ENCODE measurements at regions of chr22 and their contacts with region 1.

Region 1: DNA sequence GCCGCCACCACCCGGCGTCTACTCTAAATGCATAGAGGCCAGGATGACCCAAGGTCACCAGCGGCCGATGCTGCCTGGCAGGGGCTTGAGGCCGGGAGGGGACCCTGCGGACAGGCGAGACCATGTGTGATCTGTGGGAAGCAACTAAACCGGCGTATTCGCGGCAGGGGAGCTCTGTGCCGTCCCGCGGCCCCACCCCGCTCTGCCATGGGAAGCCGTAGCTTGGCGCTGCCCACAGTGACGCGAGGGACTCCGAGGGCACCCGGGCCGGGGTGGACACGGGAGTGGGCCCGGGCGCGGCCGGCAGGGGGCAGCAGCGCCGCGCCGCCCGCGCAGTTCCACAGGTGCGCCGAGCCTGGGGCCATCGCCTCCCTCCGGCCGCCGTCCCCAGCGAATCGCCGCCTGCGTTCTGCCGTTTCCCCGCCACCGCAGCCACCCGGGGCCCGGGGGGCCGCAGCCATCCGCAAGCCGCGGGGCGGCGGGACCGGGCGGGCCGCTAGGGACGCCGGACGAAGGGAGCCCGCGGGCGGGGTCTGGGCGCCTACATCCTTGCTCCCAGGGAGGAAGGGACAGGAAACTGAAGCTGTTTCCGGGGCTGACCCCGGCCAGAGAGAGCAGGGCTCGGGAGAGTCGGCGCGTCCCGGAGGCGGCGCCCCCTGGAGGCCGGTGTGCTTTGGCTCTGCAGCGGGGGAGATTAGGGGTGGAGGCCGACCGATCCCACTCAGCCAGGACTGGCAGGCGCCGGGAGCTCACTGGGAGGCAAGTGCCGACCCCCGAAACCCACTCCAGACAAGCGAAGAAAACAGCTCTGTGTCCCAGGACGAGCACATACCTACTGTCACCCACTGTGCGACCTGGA is 12.5 kb upstream of the HDHD5 start:
- DNase-seq: peak; percentile 92 to 97 (median 95)
- ATAC-seq: peak; percentile 78 to 95 (median 92)
- H3K4me3 ChIP-seq: peak overlapping the region; percentile 55 to 78 (median 70)
- H3K27ac ChIP-seq: peak overlapping the region; percentile 92 to 100 (median 98)
- H3K4me1 ChIP-seq: peaks cover 0 to 34% (median 15%) of the 10 kb centered on the region in 12 donors
- H3K27me3 ChIP-seq: no peaks in the 10 kb centered on the region
- CTCF ChIP-seq: peak; percentile 67 to 91 (median 78)
- POLR2A ChIP-seq: peak in 1 of 2 donors; percentile 51

Region 2: GRCh38 chr22:17077255-17077654 is 94.3 kb before region 1 on chr22:
- intact Hi-C with region 1: loop called in 7 of 10 experiments (anchors 1 to 5 kb)
- DNase-seq: no peak
- ATAC-seq: no peak
- H3K4me3 ChIP-seq: no peak overlapping the region
- H3K27ac ChIP-seq: no peak overlapping the region
- H3K4me1 ChIP-seq: peaks cover 0 to 23% (median 0%) of the 10 kb centered on the region in 12 donors
- H3K27me3 ChIP-seq: no peaks in the 10 kb centered on the region
- CTCF ChIP-seq: no peak
- POLR2A ChIP-seq: no peak

Region 3: DNA sequence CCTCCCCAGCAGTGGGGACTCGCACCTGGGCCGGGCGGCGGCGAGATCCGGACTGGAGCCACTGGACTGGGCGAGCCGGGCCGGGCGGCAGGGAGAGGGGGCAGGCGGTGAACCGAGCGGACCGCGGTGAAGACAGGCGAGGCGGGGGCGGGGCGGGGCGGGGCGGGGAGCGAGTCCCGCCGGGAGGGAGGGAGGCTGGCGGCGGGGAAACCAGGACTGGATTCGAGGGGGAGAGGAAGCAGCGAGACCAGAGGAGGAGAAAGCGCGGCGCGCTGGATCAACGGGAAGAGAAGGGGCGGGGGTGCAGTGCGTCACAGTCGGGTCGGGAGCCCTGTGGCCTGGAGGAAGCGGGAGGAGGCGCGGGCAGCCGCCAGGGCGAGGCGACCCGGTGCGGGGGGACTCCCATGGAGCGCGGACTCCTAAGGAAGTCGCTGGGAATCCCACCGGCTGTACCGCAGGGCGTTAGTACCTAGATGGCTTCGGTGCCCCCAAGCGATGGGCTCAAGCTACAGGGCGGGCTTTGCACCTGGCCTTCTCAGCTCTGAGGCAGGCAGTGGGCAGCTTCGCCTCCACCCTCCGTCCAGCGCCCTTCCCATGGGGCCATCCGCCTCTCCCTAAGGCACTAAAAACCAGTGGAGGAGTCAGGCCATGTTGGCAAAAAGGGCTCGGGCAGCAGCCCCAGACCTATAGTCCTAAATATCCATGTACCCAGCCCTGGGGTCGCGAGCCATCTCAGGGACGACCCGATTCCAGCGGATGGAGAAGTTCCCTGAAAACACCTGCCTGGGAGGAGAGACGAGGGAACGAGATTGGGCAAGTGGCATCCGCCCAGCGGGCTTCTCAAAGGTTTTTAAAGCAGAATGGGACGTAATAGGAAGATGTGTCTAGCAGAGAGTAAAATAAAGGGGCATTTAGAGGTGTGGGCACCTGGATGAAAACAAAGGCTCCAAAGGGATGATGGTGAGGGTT is 50.0 kb before region 1 on chr22 and contains the start of gene TMEM121B:
- intact Hi-C with region 1: loop called in 6 of 10 experiments (anchors 2 to 5 kb)
- DNase-seq: peak; percentile 83 to 91 (median 89)
- ATAC-seq: peak; percentile 47 to 88 (median 84)
- H3K4me3 ChIP-seq: peak within 1 kb of the TSS; percentile 55 to 79 (median 65)
- H3K27ac ChIP-seq: peak within 1 kb of the TSS; percentile 46 to 87 (median 64)
- H3K4me1 ChIP-seq: peaks cover 0 to 48% (median 19%) of the 10 kb centered on the region in 12 donors
- H3K27me3 ChIP-seq: peaks cover 0 to 13% (median 0%) of the 10 kb centered on the region in 9 donors
- CTCF ChIP-seq: no peak
- POLR2A ChIP-seq: no peak
- total RNA-seq, gene TMEM121B: 1.1 to 3.3 (median 1.8) TPM

Region 4: DNA sequence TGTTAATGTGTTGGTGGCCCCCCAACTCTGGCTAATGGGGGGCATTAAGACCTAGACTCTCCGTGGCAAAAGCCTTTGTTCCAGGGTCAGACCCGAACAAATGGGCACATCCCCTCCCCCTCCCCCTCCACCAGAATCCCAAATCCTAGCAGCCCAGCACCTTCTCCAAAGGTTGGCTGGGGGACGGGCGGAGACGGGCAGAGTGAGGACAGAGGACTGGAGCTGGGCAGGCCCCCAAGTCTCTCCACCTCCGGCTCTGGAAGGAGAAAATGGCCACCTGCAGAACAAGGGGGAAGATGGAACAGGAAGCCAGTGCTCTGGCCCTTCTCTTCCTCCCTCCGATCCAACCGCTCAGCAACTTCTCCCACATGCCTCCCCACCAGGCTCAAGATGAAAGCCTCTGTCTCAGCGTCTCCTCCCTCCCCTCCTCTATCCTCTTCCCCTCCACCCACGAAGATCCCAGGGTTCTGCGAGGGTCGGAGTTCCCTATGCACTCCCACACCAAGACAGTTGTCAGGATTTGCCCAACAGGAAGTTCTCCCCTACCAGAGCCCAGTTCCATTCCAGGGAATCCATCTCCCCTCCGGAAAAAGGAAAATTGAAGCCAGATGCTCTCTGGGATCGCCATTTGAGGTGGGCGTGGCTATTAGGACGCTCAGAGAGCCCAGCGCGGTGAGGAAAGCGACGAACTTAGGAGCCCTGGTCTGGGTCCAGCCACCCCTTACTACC is 27.6 kb after region 1 on chr22:
- intact Hi-C with region 1: loop called in 6 of 10 experiments (anchors 1 to 2 kb)
- DNase-seq: peak in 4 of 5 donors; percentile 50 to 69 (median 66)
- ATAC-seq: peak; percentile 43 to 82 (median 76)
- H3K4me3 ChIP-seq: peak overlapping the region; percentile 1 to 62 (median 53)
- H3K27ac ChIP-seq: peak overlapping the region; percentile 66 to 92 (median 87)
- H3K4me1 ChIP-seq: peaks cover 0 to 21% (median 7%) of the 10 kb centered on the region in 12 donors
- H3K27me3 ChIP-seq: no peaks in the 10 kb centered on the region
- CTCF ChIP-seq: no peak
- POLR2A ChIP-seq: no peak

Region 5: DNA sequence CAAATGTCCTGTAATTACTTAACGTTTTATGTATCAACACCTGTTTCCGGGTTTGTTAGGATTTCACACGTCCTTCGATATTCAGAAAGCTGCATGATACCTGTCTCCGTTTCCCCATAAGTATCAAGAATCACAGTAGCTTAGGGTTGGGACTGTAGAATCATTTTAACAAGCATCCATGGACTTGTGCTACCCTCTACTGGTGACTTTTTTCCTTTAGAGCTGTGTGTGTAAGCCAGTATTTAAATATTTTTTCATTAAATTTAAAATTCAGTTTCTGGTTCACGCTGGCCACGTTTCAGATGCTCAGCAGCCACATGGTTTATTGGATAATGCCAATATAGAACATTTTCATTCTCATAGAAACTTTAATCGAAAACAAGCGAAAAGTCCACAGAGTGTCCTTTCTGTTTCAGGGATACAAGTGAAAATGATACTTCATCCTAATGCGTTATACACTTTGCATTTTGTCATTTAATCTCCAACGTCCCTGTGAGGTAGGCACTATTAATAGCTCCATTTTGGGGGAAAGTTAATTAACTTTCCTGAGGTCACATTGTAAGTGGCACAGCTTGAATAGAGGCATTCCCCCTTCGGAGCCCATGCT is 330.2 kb after region 1 on chr22:
- intact Hi-C with region 1: loop called in 9 of 10 experiments (anchors 1 to 10 kb)
- DNase-seq: peak in 2 of 5 donors; percentile 19 to 26
- ATAC-seq: peak; percentile 76 to 88 (median 86)
- H3K4me3 ChIP-seq: no peak overlapping the region
- H3K27ac ChIP-seq: no peak overlapping the region
- H3K4me1 ChIP-seq: no peaks in the 10 kb centered on the region
- H3K27me3 ChIP-seq: no peaks in the 10 kb centered on the region
- CTCF ChIP-seq: peak; percentile 51 to 81 (median 69)
- POLR2A ChIP-seq: no peak

Measured in heart left ventricle (tissue), 16 donors.